Right cardiac atrium (tissue), 5 donors: ENCODE measurements at regions of chr14 and their contacts with region 1.

Region 1: GRCh38 chr14:56339855-56340701 is 221.9 kb downstream of the PELI2 start:
- DNase-seq: peak; percentile 78 to 94 (median 88)
- ATAC-seq: peak; percentile 92 to 93
- H3K4me3 ChIP-seq: no peak overlapping the region
- H3K27ac ChIP-seq: no peak overlapping the region
- H3K4me1 ChIP-seq: peaks cover 1% of the 10 kb centered on the region
- H3K27me3 ChIP-seq: no peaks in the 10 kb centered on the region

Region 2: GRCh38 chr14:55749201-55749812 is 590.8 kb before region 1 on chr14:
- intact Hi-C with region 1: loop called in 1 of 4 experiments (anchors 10 kb)
- DNase-seq: no peak
- ATAC-seq: no peak
- H3K4me3 ChIP-seq: no peak overlapping the region
- H3K27ac ChIP-seq: no peak overlapping the region
- H3K4me1 ChIP-seq: no peaks in the 10 kb centered on the region
- H3K27me3 ChIP-seq: no peaks in the 10 kb centered on the region